ENCODE measurements at regions of chr4 and their contacts with region 1.

Region 1: DNA sequence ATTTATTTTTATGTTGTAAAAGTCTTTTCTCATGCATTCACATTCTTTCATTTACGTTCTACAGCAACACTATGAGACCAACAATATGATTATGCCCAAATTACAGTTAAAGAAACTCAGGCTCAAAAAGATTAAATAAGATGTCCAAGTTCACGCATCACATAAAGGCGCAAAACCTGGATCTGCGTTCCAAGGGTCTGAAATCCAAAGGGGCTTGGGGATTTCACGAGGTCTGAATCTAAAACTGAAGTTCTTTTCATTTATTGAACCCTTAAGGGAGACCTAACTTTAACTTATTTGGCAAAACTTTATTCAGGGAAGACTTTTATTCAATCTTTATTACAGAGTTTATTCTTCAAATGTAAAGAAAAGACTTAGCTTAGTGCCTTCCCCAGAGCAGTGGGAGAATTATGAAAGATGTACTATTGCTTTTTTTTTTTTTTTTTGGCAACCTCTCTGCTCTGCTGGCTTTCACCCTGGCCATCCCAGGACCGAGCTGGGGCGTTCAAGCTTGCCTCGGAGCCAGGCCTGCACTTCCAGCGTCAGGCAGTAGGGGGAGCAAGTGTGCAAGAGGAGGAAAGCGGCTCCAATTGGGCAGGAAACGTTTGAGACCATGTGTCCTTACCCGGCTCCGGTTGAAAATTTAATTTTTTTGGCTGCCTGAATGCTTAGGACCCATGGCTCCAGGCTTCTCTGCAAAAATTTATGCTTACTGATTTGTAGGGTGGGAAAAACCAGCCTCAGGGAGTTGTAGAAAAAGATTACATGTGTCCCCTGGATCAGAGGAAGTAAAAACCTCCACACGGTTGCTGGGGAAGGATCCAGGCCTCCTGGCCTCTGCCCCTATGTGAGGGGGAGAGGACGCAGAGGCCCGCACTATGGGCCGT is 344.3 kb upstream of the KLF3 start:
- DNase-seq: peak; percentile 95
- H3K4me3 Mint-ChIP-seq: peak overlapping the region; percentile 23
- H3K27ac Mint-ChIP-seq: peak overlapping the region; percentile 88
- H3K4me1 Mint-ChIP-seq: peaks cover 28% of the 10 kb centered on the region
- H3K27me3 Mint-ChIP-seq: no peaks in the 10 kb centered on the region
- CTCF ChIP-seq: peak; percentile 96

Region 2: DNA sequence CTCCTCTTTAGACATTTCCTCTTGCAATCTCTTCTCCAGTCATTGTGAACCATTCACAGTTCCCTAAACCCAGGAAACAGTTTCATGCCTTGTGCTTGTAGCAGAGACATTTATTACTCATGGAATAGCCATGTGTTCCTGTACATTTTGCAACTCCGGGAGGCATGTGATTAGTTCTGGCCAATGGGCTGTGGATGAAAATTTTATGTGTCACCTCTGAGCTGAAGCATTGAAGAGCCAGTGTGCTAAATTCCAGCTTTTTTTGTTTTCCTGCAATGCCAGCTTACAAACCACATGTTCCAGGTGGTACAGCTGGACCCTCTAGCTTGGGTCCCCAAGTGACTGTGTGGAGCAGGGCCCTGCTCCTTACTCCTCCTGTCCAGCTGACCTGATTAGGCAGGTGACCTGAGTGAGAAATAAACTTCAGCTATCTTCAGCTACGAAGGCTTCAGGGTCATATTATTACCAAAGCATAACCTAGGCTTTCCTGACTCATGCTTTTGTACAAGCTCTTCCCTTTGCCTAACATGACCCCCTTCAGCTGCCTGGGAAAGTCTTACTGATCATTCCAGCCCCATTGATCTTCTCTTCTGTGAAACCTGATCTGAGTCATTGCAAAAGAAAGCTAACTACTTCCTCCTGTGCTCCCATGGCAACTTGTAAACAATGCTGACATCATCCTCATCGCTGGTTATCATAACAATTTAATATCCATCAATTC is 159.1 kb before region 1 on chr4:
- CTCF ChIA-PET with region 1: interaction called, 8 read pairs
- POLR2A ChIA-PET with region 1: interaction called, 10 read pairs
- intact Hi-C with region 1: no loop called
- DNase-seq: peak; percentile 96
- H3K4me3 Mint-ChIP-seq: peak overlapping the region; percentile 35
- H3K27ac Mint-ChIP-seq: peak overlapping the region; percentile 97
- H3K4me1 Mint-ChIP-seq: peaks cover 67% of the 10 kb centered on the region
- H3K27me3 Mint-ChIP-seq: no peaks in the 10 kb centered on the region
- CTCF ChIP-seq: no peak

Region 3: GRCh38 chr4:38387348-38387747 is 67.6 kb after region 1 on chr4:
- CTCF ChIA-PET with region 1: interaction called, 7 read pairs
- POLR2A ChIA-PET with region 1: interaction called, 106 read pairs
- intact Hi-C with region 1: loop called (anchors 1 kb)
- DNase-seq: peak; percentile 84
- H3K4me3 Mint-ChIP-seq: no peak overlapping the region
- H3K27ac Mint-ChIP-seq: no peak overlapping the region
- H3K4me1 Mint-ChIP-seq: peaks cover 28% of the 10 kb centered on the region
- H3K27me3 Mint-ChIP-seq: no peaks in the 10 kb centered on the region
- CTCF ChIP-seq: no peak

Region 4: GRCh38 chr4:38601244-38601897 is 281.7 kb after region 1 on chr4:
- CTCF ChIA-PET with region 1: interaction called, 4 read pairs
- POLR2A ChIA-PET with region 1: interaction called, 3 read pairs
- intact Hi-C with region 1: loop called (anchors 10 kb)
- DNase-seq: peak; percentile 92
- H3K4me3 Mint-ChIP-seq: no peak overlapping the region
- H3K27ac Mint-ChIP-seq: no peak overlapping the region
- H3K4me1 Mint-ChIP-seq: peaks cover 19% of the 10 kb centered on the region
- H3K27me3 Mint-ChIP-seq: no peaks in the 10 kb centered on the region
- CTCF ChIP-seq: no peak

Region 5: DNA sequence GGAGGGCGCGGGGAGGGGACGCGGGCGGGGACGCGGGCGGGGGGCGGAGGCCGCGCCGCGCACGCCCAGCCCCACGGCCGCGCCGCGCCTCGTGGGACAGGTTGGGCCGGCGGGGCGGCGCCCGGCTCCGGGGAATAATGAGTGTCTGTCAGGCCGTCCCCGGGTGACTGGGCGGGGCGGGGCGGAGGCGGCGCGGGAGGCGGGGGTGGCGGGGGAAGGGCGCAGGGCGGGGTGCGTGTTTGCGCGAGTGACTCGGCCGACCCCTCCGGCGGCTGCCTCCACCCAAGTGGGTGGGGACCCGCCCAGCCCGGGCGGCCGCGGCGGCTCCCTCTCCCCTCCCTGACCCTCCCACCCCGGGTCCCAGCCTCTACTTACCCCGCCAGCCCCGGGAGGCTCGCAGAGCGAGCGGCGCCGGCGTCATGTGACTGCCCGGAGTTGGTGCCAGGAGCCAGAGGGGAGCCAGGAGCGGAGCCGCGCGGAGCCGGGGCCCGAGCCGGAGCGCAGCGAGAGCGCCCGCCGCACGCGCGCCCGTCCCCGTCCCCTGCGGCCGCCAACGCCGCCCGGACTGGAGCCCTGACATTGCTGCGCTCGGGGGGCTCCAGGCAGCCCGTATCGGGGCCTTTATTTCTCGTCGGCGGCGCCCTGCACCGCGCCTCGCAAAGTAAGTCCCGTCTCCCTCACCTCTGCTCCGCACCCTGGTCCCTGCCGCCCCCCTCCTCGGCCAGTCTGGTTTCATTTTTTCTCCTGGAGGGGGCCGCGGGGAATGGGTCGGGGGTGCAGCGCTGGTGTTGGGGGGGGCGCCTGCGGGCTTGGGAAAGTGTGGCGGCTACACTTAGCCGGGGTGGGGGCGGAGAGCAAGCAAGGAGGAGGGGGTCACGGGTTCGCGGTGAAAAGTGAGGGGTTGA is 344.4 kb after region 1 on chr4 and contains the start of gene KLF3:
- CTCF ChIA-PET with region 1: interaction called, 16 read pairs
- POLR2A ChIA-PET with region 1: interaction called, 192 read pairs
- intact Hi-C with region 1: loop called (anchors 1 kb)
- DNase-seq: peak; percentile 83
- H3K4me3 Mint-ChIP-seq: peak within 1 kb of the TSS; percentile 92
- H3K27ac Mint-ChIP-seq: peak within 1 kb of the TSS; percentile 76
- H3K4me1 Mint-ChIP-seq: peaks cover 11% of the 10 kb centered on the region
- H3K27me3 Mint-ChIP-seq: no peaks in the 10 kb centered on the region
- CTCF ChIP-seq: no peak
- total RNA-seq, gene KLF3: 45.3 and 51.2 TPM in 2 replicates

Region 6: GRCh38 chr4:38730830-38731646 is 411.3 kb after region 1 on chr4:
- CTCF ChIA-PET with region 1: interaction called, 8 read pairs
- POLR2A ChIA-PET with region 1: interaction called, 5 read pairs
- intact Hi-C with region 1: loop called (anchors 1 kb)
- DNase-seq: peak; percentile 81
- H3K4me3 Mint-ChIP-seq: no peak overlapping the region
- H3K27ac Mint-ChIP-seq: no peak overlapping the region
- H3K4me1 Mint-ChIP-seq: peaks cover 16% of the 10 kb centered on the region
- H3K27me3 Mint-ChIP-seq: no peaks in the 10 kb centered on the region
- CTCF ChIP-seq: peak; percentile 97

Measured in MCF 10A (cell line).